CD4-positive, alpha-beta memory T cell (primary cell): ENCODE measurements at regions of chr1 and their contacts with region 1.

Region 1: DNA sequence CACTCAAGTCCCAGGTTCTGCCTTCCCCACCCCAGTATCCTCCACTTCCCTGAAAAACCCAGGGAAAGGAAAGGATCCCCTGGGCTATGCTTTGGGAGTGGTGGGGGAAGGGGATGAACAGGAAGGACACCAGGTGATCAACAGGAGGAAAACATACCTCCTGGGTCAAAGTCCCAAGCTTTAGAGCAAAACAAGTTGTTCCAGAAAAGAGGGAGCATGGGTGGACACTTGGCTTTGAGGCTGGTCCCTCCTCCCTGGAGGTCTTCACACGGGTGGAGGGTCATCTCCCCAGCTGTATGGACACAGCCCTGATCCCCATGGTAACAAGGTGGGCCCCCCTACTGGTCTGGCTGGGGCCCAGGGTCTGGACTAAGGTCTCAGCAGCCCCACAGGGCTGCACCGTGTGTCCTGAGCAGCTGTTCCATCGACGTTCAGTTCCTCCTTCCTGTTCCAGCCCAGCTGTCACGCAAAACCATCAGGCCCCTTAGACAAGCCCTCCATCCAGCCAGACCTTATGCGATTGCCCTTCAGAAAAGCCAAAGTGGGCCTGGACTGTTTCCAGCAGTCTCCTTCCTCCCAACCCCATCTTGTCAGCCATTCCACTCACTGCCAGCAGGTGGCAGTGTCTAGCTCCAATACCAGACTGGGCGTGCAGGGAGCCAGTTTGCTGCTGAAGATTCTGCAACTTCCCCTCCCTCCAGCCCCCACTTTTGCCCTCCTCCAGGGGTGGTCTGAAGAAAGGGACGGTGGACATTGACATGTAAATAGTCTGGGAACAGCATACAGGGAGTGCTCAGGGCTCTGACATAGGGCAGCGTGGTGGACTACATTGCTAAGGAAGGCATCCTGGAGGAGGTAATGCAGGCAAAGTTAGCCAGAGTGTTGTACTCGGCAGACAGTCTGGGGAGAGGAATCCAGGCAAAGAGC is 2.9 kb upstream of the PDZK1IP1 start:
- DNase-seq: peak; percentile 42 to 59 (median 53)
- H3K4me3 ChIP-seq: no peak overlapping the region
- H3K4me3 Mint-ChIP-seq: no peak overlapping the region
- H3K27ac ChIP-seq: no peak overlapping the region
- H3K27ac Mint-ChIP-seq: no peak overlapping the region
- H3K4me1 ChIP-seq: no peaks in the 10 kb centered on the region
- H3K4me1 Mint-ChIP-seq: peaks cover 0 to 4% (median 4%) of the 10 kb centered on the region in 4 donors
- H3K27me3 ChIP-seq: no peaks in the 10 kb centered on the region
- H3K27me3 Mint-ChIP-seq: peaks cover 7 to 9% of the 10 kb centered on the region in 2 donors

Region 2: GRCh38 chr1:47179017-47179987 is 13.4 kb before region 1 on chr1:
- CTCF ChIA-PET with region 1: interaction called, 169 read pairs
- POLR2A ChIA-PET with region 1: interaction called, 4 read pairs
- intact Hi-C with region 1: no loop called
- DNase-seq: peak; percentile 45 to 60 (median 58)
- H3K4me3 ChIP-seq: peak overlapping the region; percentile 34 to 53
- H3K4me3 Mint-ChIP-seq: peak overlapping the region; percentile 76 to 88 (median 86)
- H3K27ac ChIP-seq: no peak overlapping the region
- H3K27ac Mint-ChIP-seq: peak overlapping the region in 3 of 7 donors; percentile 32 to 75 (median 66)
- H3K4me1 ChIP-seq: peaks cover 7% of the 10 kb centered on the region
- H3K4me1 Mint-ChIP-seq: peaks cover 9 to 17% (median 13%) of the 10 kb centered on the region in 4 donors
- H3K27me3 ChIP-seq: peaks cover 10% of the 10 kb centered on the region
- H3K27me3 Mint-ChIP-seq: peaks cover 15 to 40% of the 10 kb centered on the region in 2 donors

Region 3: GRCh38 chr1:47262787-47263413 is 70.2 kb after region 1 on chr1:
- CTCF ChIA-PET with region 1: interaction called, 67 read pairs
- POLR2A ChIA-PET with region 1: no interaction called
- intact Hi-C with region 1: loop called (anchors 1 kb)
- DNase-seq: peak in 4 of 5 donors; percentile 8 to 32 (median 16)
- H3K4me3 ChIP-seq: no peak overlapping the region
- H3K4me3 Mint-ChIP-seq: no peak overlapping the region
- H3K27ac ChIP-seq: no peak overlapping the region
- H3K27ac Mint-ChIP-seq: no peak overlapping the region
- H3K4me1 ChIP-seq: no peaks in the 10 kb centered on the region
- H3K4me1 Mint-ChIP-seq: no peaks in the 10 kb centered on the region
- H3K27me3 ChIP-seq: no peaks in the 10 kb centered on the region
- H3K27me3 Mint-ChIP-seq: no peaks in the 10 kb centered on the region

Region 4: DNA sequence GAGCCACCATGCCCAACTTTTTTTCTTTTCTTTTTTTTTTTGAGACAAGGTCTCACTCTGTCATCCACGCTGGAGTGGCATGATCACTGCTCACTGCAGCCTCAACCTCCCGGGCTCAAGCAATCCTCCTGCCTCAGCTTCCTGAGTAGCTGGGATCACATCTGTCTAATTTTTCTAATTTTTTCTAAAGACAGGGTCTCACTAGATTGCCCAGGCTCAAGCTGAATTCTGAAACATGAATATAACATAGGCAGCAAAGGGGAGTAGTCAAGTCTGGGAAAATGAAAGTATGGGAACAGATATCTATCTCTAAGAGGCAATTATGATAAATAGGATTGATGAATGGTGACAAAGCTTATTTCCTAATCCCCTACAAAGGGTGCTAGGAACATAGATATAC is 133.6 kb after region 1 on chr1:
- CTCF ChIA-PET with region 1: no interaction called
- POLR2A ChIA-PET with region 1: no interaction called
- intact Hi-C with region 1: no loop called
- DNase-seq: no peak
- H3K4me3 ChIP-seq: no peak overlapping the region
- H3K4me3 Mint-ChIP-seq: no peak overlapping the region
- H3K27ac ChIP-seq: no peak overlapping the region
- H3K27ac Mint-ChIP-seq: no peak overlapping the region
- H3K4me1 ChIP-seq: no peaks in the 10 kb centered on the region
- H3K4me1 Mint-ChIP-seq: no peaks in the 10 kb centered on the region
- H3K27me3 ChIP-seq: no peaks in the 10 kb centered on the region
- H3K27me3 Mint-ChIP-seq: no peaks in the 10 kb centered on the region

Region 5: GRCh38 chr1:47424336-47424982 is 231.7 kb after region 1 on chr1:
- CTCF ChIA-PET with region 1: interaction called, 3 read pairs
- POLR2A ChIA-PET with region 1: no interaction called
- intact Hi-C with region 1: loop called (anchors 1 kb)
- DNase-seq: no peak
- H3K4me3 ChIP-seq: no peak overlapping the region
- H3K4me3 Mint-ChIP-seq: no peak overlapping the region
- H3K27ac ChIP-seq: no peak overlapping the region
- H3K27ac Mint-ChIP-seq: no peak overlapping the region
- H3K4me1 ChIP-seq: no peaks in the 10 kb centered on the region
- H3K4me1 Mint-ChIP-seq: peaks cover 0 to 5% (median 0%) of the 10 kb centered on the region in 4 donors
- H3K27me3 ChIP-seq: no peaks in the 10 kb centered on the region
- H3K27me3 Mint-ChIP-seq: no peaks in the 10 kb centered on the region

Region 6: GRCh38 chr1:47725992-47726855 is 533.5 kb after region 1 on chr1:
- CTCF ChIA-PET with region 1: interaction called, 13 read pairs
- POLR2A ChIA-PET with region 1: no interaction called
- intact Hi-C with region 1: loop called (anchors 5 kb)
- DNase-seq: peak; percentile 38 to 56 (median 48)
- H3K4me3 ChIP-seq: no peak overlapping the region
- H3K4me3 Mint-ChIP-seq: peak overlapping the region; percentile 53 to 86 (median 76)
- H3K27ac ChIP-seq: no peak overlapping the region
- H3K27ac Mint-ChIP-seq: no peak overlapping the region
- H3K4me1 ChIP-seq: peaks cover 4% of the 10 kb centered on the region
- H3K4me1 Mint-ChIP-seq: peaks cover 3 to 12% (median 9%) of the 10 kb centered on the region in 4 donors
- H3K27me3 ChIP-seq: peaks cover 12% of the 10 kb centered on the region
- H3K27me3 Mint-ChIP-seq: peaks cover 30% of the 10 kb centered on the region in 2 donors